ENCODE measurements at regions of chr3 and their contacts with region 1.

Region 1: GRCh38 chr3:187679638-187680396 is 9.6 kb upstream of the SST start:
- DNase-seq: peak; percentile 55 to 92
- H3K4me3 ChIP-seq: no peak overlapping the region
- CTCF ChIP-seq: peak in 1 of 3 donors; percentile 71
- POLR2A ChIP-seq: no peak

Region 2: DNA sequence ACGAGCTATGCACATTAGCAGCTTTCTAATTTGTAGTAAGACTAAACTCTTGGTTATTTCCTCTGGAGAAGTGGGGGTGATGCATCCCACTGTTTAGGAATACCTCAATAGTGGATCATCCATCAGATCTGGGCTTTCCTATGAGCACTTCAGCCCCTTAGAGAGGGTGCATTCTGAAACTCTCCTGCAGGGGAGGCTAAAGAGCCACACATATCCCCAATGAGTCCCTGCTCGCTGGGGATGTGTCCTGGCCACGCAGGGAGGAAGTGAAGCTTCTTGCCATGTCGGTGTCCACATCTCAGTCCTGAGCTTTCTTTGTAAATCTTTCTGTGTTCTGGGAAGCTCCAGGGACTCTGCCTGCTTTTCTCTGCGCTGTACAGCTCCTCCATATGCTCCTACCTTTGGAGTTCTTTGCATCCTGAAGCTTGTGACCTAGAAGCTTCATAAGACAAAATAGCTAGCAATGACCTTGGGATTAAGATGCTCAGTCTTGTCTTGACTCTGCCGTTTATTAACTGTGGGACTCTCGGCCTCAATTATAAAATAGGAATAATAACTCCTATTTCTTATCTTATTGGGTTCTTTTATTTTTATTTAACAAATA is 360.0 kb before region 1 on chr3:
- intact Hi-C with region 1: loop called (anchors 5 kb)
- DNase-seq: peak; percentile 71 to 90
- H3K4me3 ChIP-seq: no peak overlapping the region
- CTCF ChIP-seq: peak in 1 of 3 donors; percentile 70
- POLR2A ChIP-seq: no peak